ENCODE measurements at regions of chr22 and their contacts with region 1.

Region 1: GRCh38 chr22:38705235-38706100 is at the start of gene GTPBP1:
- DNase-seq: peak; percentile 90 to 100
- ATAC-seq: peak; percentile 72 to 86 (median 72)
- H3K4me3 ChIP-seq: peak within 1 kb of the TSS; percentile 81
- H3K4me3 Mint-ChIP-seq: peak within 1 kb of the TSS; percentile 91
- H3K27ac ChIP-seq: peak within 1 kb of the TSS; percentile 79
- H3K27ac Mint-ChIP-seq: peak within 1 kb of the TSS; percentile 95 to 96
- H3K4me1 ChIP-seq: peaks cover 35% of the 10 kb centered on the region
- H3K4me1 Mint-ChIP-seq: peaks cover 50 to 59% of the 10 kb centered on the region in 2 donors
- H3K27me3 ChIP-seq: no peaks in the 10 kb centered on the region
- H3K27me3 Mint-ChIP-seq: no peaks in the 10 kb centered on the region
- CTCF ChIP-seq: no peak
- total RNA-seq, gene GTPBP1: 236 to 259 (median 249) TPM

Region 2: GRCh38 chr22:38181453-38182247 is 523.8 kb before region 1 on chr22 and contains the start of gene PLA2G6:
- intact Hi-C with region 1: loop called (anchors 5 kb)
- DNase-seq: peak; percentile 96 to 98
- ATAC-seq: peak; percentile 90 to 99 (median 92)
- H3K4me3 ChIP-seq: peak within 1 kb of the TSS; percentile 59
- H3K4me3 Mint-ChIP-seq: peak within 1 kb of the TSS; percentile 93
- H3K27ac ChIP-seq: peak within 1 kb of the TSS; percentile 75
- H3K27ac Mint-ChIP-seq: peak within 1 kb of the TSS; percentile 89 to 93
- H3K4me1 ChIP-seq: peaks cover 45% of the 10 kb centered on the region
- H3K4me1 Mint-ChIP-seq: peaks cover 39 to 41% of the 10 kb centered on the region in 2 donors
- H3K27me3 ChIP-seq: no peaks in the 10 kb centered on the region
- H3K27me3 Mint-ChIP-seq: no peaks in the 10 kb centered on the region
- CTCF ChIP-seq: no peak
- total RNA-seq, gene PLA2G6: 137 to 167 (median 145) TPM

Region 3: DNA sequence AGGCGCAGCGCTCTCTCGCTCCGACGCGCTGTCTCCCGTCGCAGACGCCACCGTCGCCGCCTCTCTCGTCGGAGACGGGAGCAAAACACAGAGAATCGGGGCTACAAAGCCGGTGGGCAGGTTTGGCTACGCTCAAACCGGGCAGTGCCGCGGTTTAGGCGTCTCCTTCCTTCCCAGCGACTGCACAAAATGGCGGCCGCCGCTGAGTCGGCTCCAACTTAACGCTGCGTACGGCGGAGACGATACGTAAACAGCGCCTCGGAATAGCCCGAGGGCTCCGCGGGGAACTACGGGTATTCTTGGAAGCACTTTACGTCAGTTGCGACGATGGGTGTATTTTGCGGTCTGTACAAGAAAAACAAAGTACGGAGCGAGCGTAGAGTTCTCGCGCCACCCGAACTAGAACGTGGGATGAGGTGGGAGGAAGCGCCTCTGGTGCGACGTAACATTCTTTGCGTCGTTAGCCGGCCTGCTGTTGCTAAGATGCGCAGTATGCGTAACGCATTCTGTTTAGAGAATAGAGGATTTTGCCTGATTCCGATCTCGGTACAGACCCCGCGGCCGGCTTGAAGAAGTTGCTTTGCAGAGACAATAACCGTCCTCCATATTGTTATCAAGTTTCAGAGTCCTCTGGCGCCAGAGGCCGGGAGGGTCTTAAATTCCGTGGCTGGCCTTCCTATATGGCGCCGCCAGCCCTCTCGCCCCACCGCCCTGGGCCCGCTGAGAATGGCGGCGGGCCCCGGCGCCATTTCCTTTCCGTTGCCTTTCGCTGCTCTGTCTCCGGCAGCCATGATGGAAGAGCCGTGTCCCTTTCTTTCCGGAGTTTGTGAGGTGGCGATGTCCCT is 199.1 kb before region 1 on chr22 and contains the start of gene DDX17:
- intact Hi-C with region 1: loop called (anchors 1 kb)
- DNase-seq: peak; percentile 91 to 99
- ATAC-seq: peak; percentile 86 to 96 (median 89)
- H3K4me3 ChIP-seq: peak within 1 kb of the TSS; percentile 80
- H3K4me3 Mint-ChIP-seq: peak within 1 kb of the TSS; percentile 100
- H3K27ac ChIP-seq: peak within 1 kb of the TSS; percentile 99
- H3K27ac Mint-ChIP-seq: peak within 1 kb of the TSS; percentile 100
- H3K4me1 ChIP-seq: peaks cover 22% of the 10 kb centered on the region
- H3K4me1 Mint-ChIP-seq: peaks cover 47 to 59% of the 10 kb centered on the region in 2 donors
- H3K27me3 ChIP-seq: no peaks in the 10 kb centered on the region
- H3K27me3 Mint-ChIP-seq: no peaks in the 10 kb centered on the region
- CTCF ChIP-seq: no peak
- total RNA-seq, gene DDX17: 571 to 752 (median 578) TPM

Region 4: DNA sequence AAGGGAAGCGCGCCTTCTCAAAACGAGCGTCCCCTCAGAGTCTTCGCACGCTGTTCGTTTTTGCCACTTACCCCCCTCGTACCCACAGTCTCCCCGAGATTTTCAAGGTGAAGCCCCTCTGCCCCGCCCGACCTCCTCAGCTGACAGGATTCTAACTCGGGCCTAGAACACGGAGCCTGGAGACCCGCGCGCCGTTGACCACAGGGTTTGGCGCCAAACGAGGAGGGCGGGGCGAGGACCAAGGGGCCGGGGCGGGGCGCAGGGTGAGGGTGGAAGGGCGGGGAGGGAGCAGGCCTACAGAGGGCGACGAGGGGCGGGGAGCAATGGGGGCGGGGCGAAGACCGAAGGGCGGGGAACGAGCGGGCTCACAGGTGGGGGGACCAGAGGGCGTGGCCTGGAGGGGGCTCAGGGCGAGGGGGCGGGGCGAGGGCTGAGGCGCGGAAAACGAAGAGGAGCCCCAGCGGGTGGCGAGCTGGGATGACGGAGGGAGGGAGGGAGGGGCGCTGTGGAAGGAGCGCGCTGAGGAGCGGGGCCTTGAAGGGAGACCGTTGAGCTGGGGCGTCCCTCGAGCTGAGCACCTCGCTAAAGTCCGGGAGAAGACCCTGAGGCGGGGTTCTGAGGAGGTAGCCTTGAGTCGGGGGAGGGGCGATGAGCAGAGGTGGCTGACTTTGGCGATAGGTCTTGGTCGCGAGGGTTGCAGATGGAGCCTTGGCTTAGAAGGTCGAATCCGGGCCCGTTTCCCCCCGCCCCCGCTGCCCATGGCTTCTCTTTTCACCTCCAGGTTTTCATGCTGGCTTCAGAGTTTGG is 135.3 kb before region 1 on chr22 and contains the start of gene DMC1:
- intact Hi-C with region 1: no loop called
- DNase-seq: peak; percentile 80 to 98
- ATAC-seq: peak; percentile 96 to 99 (median 97)
- H3K4me3 ChIP-seq: peak within 1 kb of the TSS; percentile 68
- H3K4me3 Mint-ChIP-seq: peak within 1 kb of the TSS; percentile 90
- H3K27ac ChIP-seq: peak within 1 kb of the TSS; percentile 36
- H3K27ac Mint-ChIP-seq: peak within 1 kb of the TSS; percentile 52 to 86
- H3K4me1 ChIP-seq: peaks cover 17% of the 10 kb centered on the region
- H3K4me1 Mint-ChIP-seq: peaks cover 12 to 19% of the 10 kb centered on the region in 2 donors
- H3K27me3 ChIP-seq: no peaks in the 10 kb centered on the region
- H3K27me3 Mint-ChIP-seq: no peaks in the 10 kb centered on the region
- CTCF ChIP-seq: no peak
- total RNA-seq, gene DMC1: 0.31 to 1.7 (median 0.63) TPM

Region 5: DNA sequence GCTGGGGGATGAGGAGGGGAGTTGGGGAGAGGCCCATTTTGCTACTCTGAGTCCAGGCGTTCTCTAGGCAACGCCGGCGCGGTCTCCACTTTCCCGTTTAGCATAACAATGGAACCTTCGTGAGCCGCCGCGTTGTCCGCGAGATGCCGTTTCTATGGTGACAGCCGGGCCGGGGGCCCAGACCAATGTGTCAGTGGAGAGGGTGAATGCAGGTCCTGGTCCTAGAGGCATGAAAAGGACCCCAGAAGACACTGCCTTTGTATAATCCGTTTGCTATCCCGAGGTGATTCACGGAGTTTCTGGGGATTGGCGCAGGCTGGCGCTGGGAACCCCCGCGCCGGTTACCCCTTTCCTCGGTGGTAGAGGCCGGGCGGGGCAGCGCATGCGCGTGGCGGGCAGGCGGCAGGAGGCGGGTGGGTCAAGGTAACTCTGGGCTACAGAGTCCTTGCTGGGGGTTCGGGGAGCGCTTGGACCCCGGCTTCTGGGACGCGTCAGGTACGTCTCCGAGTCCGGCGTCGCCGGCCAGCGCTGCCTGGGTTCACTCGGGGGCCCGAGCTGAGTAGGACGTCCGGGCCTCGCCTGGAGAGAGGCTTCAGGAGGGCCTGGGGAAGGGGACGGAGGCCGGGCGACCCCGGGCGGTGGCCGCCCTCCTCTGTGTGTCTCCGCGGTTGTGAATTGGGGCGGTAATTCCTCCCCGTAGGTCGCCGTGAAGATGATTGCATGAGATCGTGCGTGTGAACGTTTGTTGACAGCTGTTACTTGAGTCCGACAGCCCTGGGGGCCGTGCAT is 49.0 kb before region 1 on chr22 and contains the starts of genes CBY1 and FAM227A:
- intact Hi-C with region 1: loop called (anchors 2 kb)
- DNase-seq: peak; percentile 89 to 92
- ATAC-seq: peak; percentile 86 to 93 (median 89)
- H3K4me3 ChIP-seq: peak within 1 kb of the TSS; percentile 61
- H3K4me3 Mint-ChIP-seq: peak within 1 kb of the TSS; percentile 94
- H3K27ac ChIP-seq: peak within 1 kb of the TSS; percentile 81
- H3K27ac Mint-ChIP-seq: peak within 1 kb of the TSS; percentile 94 to 97
- H3K4me1 ChIP-seq: peaks cover 14% of the 10 kb centered on the region
- H3K4me1 Mint-ChIP-seq: peaks cover 5 to 18% of the 10 kb centered on the region in 2 donors
- H3K27me3 ChIP-seq: no peaks in the 10 kb centered on the region
- H3K27me3 Mint-ChIP-seq: no peaks in the 10 kb centered on the region
- CTCF ChIP-seq: no peak
- total RNA-seq, gene CBY1: 8.2 to 10.9 (median 10.8) TPM
- total RNA-seq, gene FAM227A: 0.07 to 0.29 (median 0.28) TPM

Region 6: DNA sequence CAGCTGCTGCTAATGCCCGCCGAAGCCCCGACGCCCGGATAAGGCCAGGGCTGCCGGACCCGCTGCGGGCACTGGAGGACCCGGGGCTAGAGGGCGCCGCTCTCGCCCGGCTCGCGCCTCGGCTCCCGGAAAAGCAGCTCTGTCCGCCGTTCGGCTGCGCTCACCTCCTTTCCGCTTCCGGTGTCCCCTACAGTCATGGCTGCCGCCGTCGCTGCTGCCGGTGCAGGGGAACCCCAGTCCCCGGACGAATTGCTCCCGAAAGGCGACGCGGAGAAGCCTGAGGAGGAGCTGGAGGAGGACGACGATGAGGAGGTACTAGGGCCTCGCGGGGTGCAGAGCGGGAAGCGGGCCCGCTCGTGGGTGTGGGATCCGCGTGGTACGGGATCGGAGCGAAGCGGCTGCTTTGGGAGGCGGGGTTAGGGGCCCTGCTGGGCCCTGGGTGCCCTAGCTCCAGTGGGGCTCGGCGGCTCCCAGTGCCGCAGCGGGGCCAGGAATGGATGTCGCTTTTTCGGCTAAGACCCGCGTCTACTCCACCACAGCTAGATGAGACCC is 23.6 kb before region 1 on chr22 and contains the start of gene TOMM22:
- intact Hi-C with region 1: loop called (anchors 2 kb)
- DNase-seq: peak; percentile 79 to 91
- ATAC-seq: peak; percentile 95 to 99 (median 97)
- H3K4me3 ChIP-seq: peak within 1 kb of the TSS; percentile 91
- H3K4me3 Mint-ChIP-seq: peak within 1 kb of the TSS; percentile 97
- H3K27ac ChIP-seq: peak within 1 kb of the TSS; percentile 76
- H3K27ac Mint-ChIP-seq: peak within 1 kb of the TSS; percentile 88 to 99
- H3K4me1 ChIP-seq: peaks cover 14% of the 10 kb centered on the region
- H3K4me1 Mint-ChIP-seq: peaks cover 15 to 16% of the 10 kb centered on the region in 2 donors
- H3K27me3 ChIP-seq: no peaks in the 10 kb centered on the region
- H3K27me3 Mint-ChIP-seq: no peaks in the 10 kb centered on the region
- CTCF ChIP-seq: peak; percentile 46
- total RNA-seq, gene TOMM22: 45.9 to 50.6 (median 47.5) TPM

Region 7: DNA sequence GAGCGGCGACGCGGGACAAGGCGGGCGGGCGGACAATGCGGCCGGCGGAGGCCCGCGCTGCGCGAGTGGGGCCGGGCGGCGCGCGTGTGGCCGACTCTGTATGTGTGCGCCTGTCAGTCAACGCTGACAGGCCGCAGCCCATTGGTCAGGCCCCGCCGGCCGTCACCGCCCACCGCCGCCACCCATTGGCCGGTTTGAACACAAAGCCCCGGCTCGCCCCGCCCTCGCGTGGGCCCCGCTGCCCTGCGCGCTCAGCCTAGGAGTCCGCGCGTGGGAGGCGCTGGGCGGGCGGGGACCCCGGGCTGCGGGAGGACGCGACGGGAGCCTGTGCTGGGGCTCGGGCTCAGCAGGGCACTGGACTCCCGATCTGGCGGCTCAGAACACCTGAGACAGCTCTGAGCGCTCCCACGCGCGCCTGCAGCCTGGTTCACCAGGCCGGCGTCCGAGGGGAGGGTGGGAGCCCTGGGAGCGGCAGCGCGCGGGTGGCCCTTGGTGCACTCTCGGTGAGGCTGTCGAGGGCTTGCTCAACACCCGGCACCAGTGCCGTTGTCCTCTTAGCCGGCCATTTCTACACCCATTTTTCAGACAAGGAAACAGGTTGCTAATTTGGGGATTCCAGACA is 50.6 kb after region 1 on chr22 and contains the start of gene SUN2:
- intact Hi-C with region 1: loop called (anchors 2 kb)
- DNase-seq: peak; percentile 96 to 97
- ATAC-seq: peak; percentile 76 to 90 (median 82)
- H3K4me3 ChIP-seq: peak within 1 kb of the TSS; percentile 93
- H3K4me3 Mint-ChIP-seq: peak within 1 kb of the TSS; percentile 99
- H3K27ac ChIP-seq: peak within 1 kb of the TSS; percentile 86
- H3K27ac Mint-ChIP-seq: peak within 1 kb of the TSS; percentile 88 to 98
- H3K4me1 ChIP-seq: peaks cover 79% of the 10 kb centered on the region
- H3K4me1 Mint-ChIP-seq: peaks cover 64 to 69% of the 10 kb centered on the region in 2 donors
- H3K27me3 ChIP-seq: no peaks in the 10 kb centered on the region
- H3K27me3 Mint-ChIP-seq: no peaks in the 10 kb centered on the region
- CTCF ChIP-seq: no peak
- total RNA-seq, gene SUN2: 882 to 1,056 (median 886) TPM